ENCODE measurements at regions of chr2 and their contacts with region 1.

Region 1: GRCh38 chr2:118003396-118003824 is 10.5 kb downstream of the CCDC93 start:
- DNase-seq: peak in 1 of 2 experiments; percentile 55
- H3K4me3 ChIP-seq: no peak overlapping the region
- H3K27ac ChIP-seq: no peak overlapping the region
- H3K4me1 ChIP-seq: 0 out of 7 replicates have a peak, but pooled peaks cover 0 to 2% (median 0%) of the 10 kb centered on the region in 4 experiments
- H3K27me3 ChIP-seq: no peaks in the 10 kb centered on the region
- CTCF ChIP-seq: peak in 2 of 3 experiments; percentile 63 to 82; a peak in 3 of 4 replicates
- EP300 ChIP-seq: no peak
- POLR2A ChIP-seq: no peak
- RAD21 ChIP-seq: peak; percentile 83 to 85

Region 2: DNA sequence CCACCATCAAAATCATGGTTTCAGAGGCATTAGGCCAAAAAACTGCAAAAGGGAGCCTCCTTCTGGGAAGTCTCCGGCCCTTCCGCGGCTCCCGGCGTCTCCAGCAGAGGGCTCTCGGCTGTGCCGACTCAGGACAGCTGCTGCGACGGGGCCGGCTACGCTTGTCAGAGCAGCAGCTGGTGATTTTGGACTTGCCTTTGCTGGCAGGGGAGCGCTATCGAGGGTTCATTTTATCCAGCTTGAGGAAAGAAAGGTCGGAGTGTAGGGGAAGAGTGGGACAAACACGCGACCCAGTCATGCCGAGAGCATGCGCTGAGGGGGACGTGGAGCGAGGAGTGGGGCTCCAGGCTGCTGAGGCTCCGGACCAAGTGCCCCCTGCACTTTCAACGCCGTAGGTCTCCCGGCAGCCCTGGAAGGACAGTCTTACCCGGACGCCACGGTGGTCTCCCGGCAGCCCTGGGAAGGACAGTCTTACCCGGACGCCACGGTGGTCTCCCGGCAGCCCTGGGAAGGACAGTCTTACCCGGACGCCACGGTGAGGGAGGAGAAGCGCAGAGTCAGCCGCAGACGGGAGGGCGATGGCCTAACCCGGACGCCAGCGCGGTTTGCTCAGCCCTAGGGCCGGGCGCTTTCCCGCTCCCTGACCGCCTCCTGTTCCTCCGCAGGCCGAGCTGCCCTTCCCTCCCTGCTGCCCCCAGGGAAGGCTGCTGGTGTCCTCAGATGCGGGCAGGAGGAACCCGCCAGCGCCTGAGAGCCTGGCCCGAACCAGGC is 167.2 kb before region 1 on chr2:
- CTCF ChIA-PET with region 1: interaction called, 19 read pairs
- POLR2A ChIA-PET with region 1: interaction called, 5 read pairs
- DNase-seq: peak in 1 of 2 experiments; percentile 89
- H3K4me3 ChIP-seq: peak overlapping the region; percentile 37 to 52 (median 42)
- H3K27ac ChIP-seq: no peak overlapping the region
- H3K4me1 ChIP-seq: peaks cover 0 to 2% (median under 1%) of the 10 kb centered on the region in 4 experiments; a peak in 3 of 7 replicates
- H3K27me3 ChIP-seq: peaks cover 0 to 4% (median 0%) of the 10 kb centered on the region in 4 experiments; a peak in 2 of 7 replicates
- CTCF ChIP-seq: peak; percentile 83 to 97 (median 89)
- EP300 ChIP-seq: no peak
- POLR2A ChIP-seq: no peak
- RAD21 ChIP-seq: peak; percentile 72 to 85

Region 3: DNA sequence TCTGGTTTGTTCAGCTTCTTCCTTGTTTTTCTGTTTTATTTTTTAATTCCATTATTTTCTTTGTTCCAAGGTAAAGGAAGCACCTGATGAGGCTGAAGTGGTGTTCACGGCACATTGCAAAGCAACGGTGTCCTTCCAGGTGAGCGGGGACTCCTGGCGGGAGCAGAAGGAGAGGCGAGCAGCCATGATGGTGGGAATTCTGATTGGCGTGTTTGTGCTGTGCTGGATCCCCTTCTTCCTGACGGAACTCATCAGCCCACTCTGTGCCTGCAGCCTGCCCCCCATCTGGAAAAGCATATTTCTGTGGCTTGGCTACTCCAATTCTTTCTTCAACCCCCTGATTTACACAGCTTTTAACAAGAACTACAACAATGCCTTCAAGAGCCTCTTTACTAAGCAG is 100.5 kb before region 1 on chr2:
- CTCF ChIA-PET with region 1: no interaction called
- POLR2A ChIA-PET with region 1: no interaction called
- DNase-seq: no peak
- H3K4me3 ChIP-seq: no peak overlapping the region
- H3K27ac ChIP-seq: no peak overlapping the region
- H3K4me1 ChIP-seq: no peaks in the 10 kb centered on the region
- H3K27me3 ChIP-seq: no peaks in the 10 kb centered on the region
- CTCF ChIP-seq: no peak
- EP300 ChIP-seq: no peak
- POLR2A ChIP-seq: no peak
- RAD21 ChIP-seq: peak; percentile 15 to 31; a peak in 2 of 4 replicates

Region 4: GRCh38 chr2:117958186-117958585 is 45.2 kb before region 1 on chr2:
- CTCF ChIA-PET with region 1: interaction called, 39 read pairs
- POLR2A ChIA-PET with region 1: no interaction called
- DNase-seq: no peak
- H3K4me3 ChIP-seq: no peak overlapping the region
- H3K27ac ChIP-seq: no peak overlapping the region
- H3K4me1 ChIP-seq: no peaks in the 10 kb centered on the region
- H3K27me3 ChIP-seq: no peaks in the 10 kb centered on the region
- CTCF ChIP-seq: no peak
- EP300 ChIP-seq: no peak
- POLR2A ChIP-seq: no peak
- RAD21 ChIP-seq: no peak

Region 5: DNA sequence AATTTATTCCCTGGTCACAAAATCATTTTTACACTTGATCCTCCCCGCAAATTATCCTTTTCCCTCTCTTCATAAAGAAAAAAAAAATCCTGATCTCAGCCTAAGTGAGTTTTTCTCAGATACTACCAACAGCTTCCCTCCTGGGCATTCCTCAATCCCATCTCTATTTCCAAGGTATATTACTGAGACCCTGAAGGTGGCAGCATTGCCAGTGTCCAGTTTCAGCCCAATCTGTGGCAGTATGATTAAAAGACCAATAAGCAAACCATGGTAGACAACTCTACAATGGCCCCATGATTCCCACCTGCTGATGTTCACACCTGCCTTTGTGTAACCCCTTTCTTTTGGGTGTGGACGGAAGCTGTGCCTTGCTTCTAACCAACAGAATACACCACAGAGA is 34.7 kb before region 1 on chr2:
- CTCF ChIA-PET with region 1: interaction called, 28 read pairs
- POLR2A ChIA-PET with region 1: interaction called, 3 read pairs
- DNase-seq: no peak
- H3K4me3 ChIP-seq: no peak overlapping the region
- H3K27ac ChIP-seq: no peak overlapping the region
- H3K4me1 ChIP-seq: no peaks in the 10 kb centered on the region
- H3K27me3 ChIP-seq: no peaks in the 10 kb centered on the region
- CTCF ChIP-seq: no peak
- EP300 ChIP-seq: no peak
- POLR2A ChIP-seq: no peak
- RAD21 ChIP-seq: no peak

Region 6: GRCh38 chr2:118013724-118014491 is 10.5 kb after region 1 on chr2 and contains the start of gene CCDC93:
- CTCF ChIA-PET with region 1: interaction called, 20 read pairs
- POLR2A ChIA-PET with region 1: interaction called, 4 read pairs
- DNase-seq: peak; percentile 46 to 92
- H3K4me3 ChIP-seq: peak within 1 kb of the TSS; percentile 69 to 93 (median 84)
- H3K27ac ChIP-seq: no peak within 1 kb of the TSS
- H3K4me1 ChIP-seq: peaks cover 0 to 5% (median 1%) of the 10 kb centered on the region in 4 experiments; a peak in 3 of 7 replicates
- H3K27me3 ChIP-seq: peaks cover 0 to 13% (median 11%) of the 10 kb centered on the region in 4 experiments; a peak in 6 of 7 replicates
- CTCF ChIP-seq: no peak
- EP300 ChIP-seq: 0 out of 3 replicates have a peak, but pooled peaks of 1 of the 2 experiments have one; percentile 39
- POLR2A ChIP-seq: peak in 1 of 2 experiments; percentile 46; a peak in 1 of 3 replicates
- RAD21 ChIP-seq: no peak
- total RNA-seq, gene CCDC93: 16.9 and 18.0 TPM in 2 replicates

Measured in H1 (cell line).